PC-9 (cell line): ENCODE measurements at regions of chr1 and their contacts with region 1.

Region 1: DNA sequence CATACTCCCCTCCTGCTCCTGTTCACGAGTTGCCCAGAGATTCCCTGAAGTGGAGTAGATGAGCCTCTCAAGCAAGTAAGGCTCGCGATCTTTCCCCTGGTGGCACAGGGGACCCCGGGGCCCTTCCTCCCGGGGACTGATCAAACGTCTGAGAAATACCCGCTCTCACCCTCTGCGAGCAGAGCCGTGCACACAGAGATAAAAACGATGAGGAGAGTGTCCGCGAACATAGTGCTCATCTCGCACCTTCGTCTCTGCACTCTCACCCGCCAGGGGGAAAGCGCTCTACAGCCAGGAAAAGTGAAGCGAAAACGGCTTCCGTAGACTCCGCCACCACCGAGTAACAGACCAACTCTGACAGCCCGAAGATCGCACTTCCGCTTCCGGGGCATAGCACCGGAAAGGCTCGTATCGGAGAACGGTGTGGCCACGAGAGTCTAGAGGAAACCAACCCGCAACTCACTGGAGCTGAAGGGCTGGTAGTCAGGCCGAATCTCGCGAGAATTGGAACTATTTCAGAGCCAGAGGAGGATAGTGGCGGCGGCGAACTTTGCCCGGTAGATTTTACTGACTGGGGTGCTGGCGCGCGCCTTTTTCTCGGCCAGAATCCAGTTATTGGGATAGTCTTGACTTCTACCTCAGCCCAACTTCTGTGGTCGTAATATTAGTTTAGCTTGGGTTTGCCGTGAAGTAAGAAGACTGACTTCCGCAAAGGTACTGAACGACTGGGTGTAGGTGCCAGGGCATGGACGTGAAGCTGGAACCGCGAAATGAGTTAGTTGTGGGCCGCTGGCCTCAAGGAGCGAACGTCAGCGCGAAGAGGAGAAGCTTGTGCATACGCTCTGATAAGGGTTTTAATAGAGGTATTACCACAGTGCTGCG is at the start of gene TMCO1:
- DNase-seq: peak; percentile 89 to 96
- H3K4me3 ChIP-seq: peak within 1 kb of the TSS; percentile 93
- H3K27ac ChIP-seq: peak within 1 kb of the TSS; percentile 83
- H3K4me1 ChIP-seq: peaks cover 25% of the 10 kb centered on the region
- H3K27me3 ChIP-seq: no peaks in the 10 kb centered on the region
- CTCF ChIP-seq: no peak
- total RNA-seq, gene TMCO1: 64.1 and 65.6 TPM in 2 replicates

Region 2: DNA sequence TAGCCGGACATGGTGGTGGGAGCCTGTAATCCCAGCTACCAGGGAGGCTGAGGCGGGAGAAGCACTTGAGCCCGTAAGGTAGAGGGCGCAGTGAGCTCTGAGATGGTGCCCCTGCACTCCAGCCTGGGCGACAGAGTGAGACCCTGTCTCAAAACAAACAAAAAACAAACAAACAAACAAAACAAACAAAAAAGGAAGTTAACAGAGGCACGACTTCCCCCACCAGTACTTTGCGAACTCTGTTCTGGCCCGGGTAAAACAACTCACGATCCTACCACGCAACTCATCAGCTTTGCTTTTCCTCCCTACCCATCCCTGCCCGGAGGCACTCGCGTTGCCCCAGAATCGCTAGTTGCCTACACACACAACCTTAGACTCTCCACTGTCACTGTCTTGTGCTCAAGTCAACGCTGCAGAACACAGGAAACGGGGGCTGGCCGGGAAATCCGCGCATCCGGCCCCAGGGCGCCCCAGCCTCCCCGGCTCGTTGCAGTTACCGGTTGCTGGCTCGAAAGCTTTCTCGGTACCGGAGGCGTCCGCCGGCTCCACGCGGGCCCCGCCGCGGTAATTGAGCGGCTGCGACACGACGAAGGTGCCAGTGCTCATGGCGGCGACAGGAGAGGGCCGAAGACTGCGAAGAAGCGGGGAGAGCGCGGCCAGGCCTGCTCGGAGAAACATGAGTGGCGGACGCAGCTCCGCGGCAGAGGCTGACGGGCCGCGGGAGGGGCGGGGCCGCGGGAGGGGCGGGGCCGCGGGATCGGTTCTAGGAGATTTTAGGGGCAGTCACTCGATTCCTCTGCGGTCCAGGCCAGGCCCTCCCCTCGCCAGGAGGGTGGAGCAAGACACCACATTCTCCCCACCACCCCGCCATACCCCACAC is 70.6 kb before region 1 on chr1 and contains the start of gene ALDH9A1:
- CTCF ChIA-PET with region 1: no interaction called
- POLR2A ChIA-PET with region 1: interaction called, 5 read pairs
- intact Hi-C with region 1: loop called (anchors 5 kb)
- DNase-seq: peak; percentile 79 to 89
- H3K4me3 ChIP-seq: peak within 1 kb of the TSS; percentile 65
- H3K27ac ChIP-seq: peak within 1 kb of the TSS; percentile 62
- H3K4me1 ChIP-seq: peaks cover 20% of the 10 kb centered on the region
- H3K27me3 ChIP-seq: no peaks in the 10 kb centered on the region
- CTCF ChIP-seq: peak; percentile 36; the same call in 1 of the 2 replicates
- total RNA-seq, gene ALDH9A1: 31.8 and 42.5 TPM in 2 replicates

Region 3: DNA sequence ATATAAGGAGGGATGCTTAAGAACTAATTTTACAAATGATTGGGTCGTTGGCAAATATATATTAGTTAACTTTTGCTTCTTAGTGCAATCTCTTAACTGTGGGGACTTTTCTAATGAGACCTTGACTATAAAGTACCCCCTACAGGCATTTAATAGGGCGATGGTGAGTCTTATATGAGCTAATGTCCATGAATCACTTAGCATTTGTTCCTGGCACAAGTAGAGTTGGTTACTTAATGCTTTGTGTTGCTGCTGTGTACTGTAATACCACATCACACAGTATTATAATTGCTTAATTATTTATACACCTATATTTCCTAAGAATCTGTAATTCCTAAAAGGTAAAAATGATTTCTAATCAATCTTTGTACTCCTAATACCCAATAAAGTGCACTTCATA is 25.2 kb after region 1 on chr1:
- CTCF ChIA-PET with region 1: interaction called, 14 read pairs
- POLR2A ChIA-PET with region 1: no interaction called
- intact Hi-C with region 1: no loop called
- DNase-seq: no peak
- H3K4me3 ChIP-seq: no peak overlapping the region
- H3K27ac ChIP-seq: no peak overlapping the region
- H3K4me1 ChIP-seq: no peaks in the 10 kb centered on the region
- H3K27me3 ChIP-seq: no peaks in the 10 kb centered on the region
- CTCF ChIP-seq: no peak

Region 4: GRCh38 chr1:165827268-165828102 is 58.7 kb after region 1 on chr1 and contains the start of gene UCK2:
- CTCF ChIA-PET with region 1: no interaction called
- POLR2A ChIA-PET with region 1: interaction called, 8 read pairs
- intact Hi-C with region 1: loop called (anchors 1 kb)
- DNase-seq: peak; percentile 72 to 80
- H3K4me3 ChIP-seq: peak within 1 kb of the TSS; percentile 62
- H3K27ac ChIP-seq: peak within 1 kb of the TSS; percentile 79
- H3K4me1 ChIP-seq: peaks cover 17% of the 10 kb centered on the region
- H3K27me3 ChIP-seq: no peaks in the 10 kb centered on the region
- CTCF ChIP-seq: no peak; the same call in 1 of the 2 replicates
- total RNA-seq, gene UCK2: 54.8 and 59.9 TPM in 2 replicates

Region 5: GRCh38 chr1:165884690-165885304 is 116.0 kb after region 1 on chr1:
- CTCF ChIA-PET with region 1: interaction called, 3 read pairs
- POLR2A ChIA-PET with region 1: interaction called, 27 read pairs
- intact Hi-C with region 1: loop called (anchors 2 kb)
- DNase-seq: no peak
- H3K4me3 ChIP-seq: no peak overlapping the region
- H3K27ac ChIP-seq: 0 out of 2 replicates have a peak overlapping the region, but pooled peaks have one; percentile 9
- H3K4me1 ChIP-seq: peaks cover 28% of the 10 kb centered on the region
- H3K27me3 ChIP-seq: no peaks in the 10 kb centered on the region
- CTCF ChIP-seq: no peak

Region 6: DNA sequence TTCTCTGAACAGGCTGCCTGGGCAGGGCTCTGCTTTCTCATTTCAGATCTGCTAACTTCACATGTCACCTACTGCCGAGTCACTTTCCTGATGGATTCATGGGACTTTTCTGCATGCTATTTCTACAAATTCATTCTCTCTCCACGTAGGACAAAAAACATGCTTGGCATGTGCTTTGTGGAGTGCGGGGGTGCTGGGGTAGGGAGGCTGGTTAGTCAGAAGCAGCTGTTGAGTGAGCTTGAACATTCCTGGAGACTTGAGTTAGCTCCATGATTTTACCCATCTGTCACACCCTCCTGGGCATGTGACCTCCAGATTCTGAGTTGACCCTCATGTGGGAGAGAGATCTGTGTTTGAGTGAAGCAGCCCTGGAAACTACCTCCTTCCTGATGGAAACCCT is 130.1 kb after region 1 on chr1:
- CTCF ChIA-PET with region 1: no interaction called
- POLR2A ChIA-PET with region 1: interaction called, 3 read pairs
- intact Hi-C with region 1: loop called (anchors 2 kb)
- DNase-seq: peak in 1 of 2 experiments; percentile 26
- H3K4me3 ChIP-seq: no peak overlapping the region
- H3K27ac ChIP-seq: no peak overlapping the region
- H3K4me1 ChIP-seq: no peaks in the 10 kb centered on the region
- H3K27me3 ChIP-seq: no peaks in the 10 kb centered on the region
- CTCF ChIP-seq: no peak